ENCODE measurements at regions of chr2 and their contacts with region 1.

Region 1: DNA sequence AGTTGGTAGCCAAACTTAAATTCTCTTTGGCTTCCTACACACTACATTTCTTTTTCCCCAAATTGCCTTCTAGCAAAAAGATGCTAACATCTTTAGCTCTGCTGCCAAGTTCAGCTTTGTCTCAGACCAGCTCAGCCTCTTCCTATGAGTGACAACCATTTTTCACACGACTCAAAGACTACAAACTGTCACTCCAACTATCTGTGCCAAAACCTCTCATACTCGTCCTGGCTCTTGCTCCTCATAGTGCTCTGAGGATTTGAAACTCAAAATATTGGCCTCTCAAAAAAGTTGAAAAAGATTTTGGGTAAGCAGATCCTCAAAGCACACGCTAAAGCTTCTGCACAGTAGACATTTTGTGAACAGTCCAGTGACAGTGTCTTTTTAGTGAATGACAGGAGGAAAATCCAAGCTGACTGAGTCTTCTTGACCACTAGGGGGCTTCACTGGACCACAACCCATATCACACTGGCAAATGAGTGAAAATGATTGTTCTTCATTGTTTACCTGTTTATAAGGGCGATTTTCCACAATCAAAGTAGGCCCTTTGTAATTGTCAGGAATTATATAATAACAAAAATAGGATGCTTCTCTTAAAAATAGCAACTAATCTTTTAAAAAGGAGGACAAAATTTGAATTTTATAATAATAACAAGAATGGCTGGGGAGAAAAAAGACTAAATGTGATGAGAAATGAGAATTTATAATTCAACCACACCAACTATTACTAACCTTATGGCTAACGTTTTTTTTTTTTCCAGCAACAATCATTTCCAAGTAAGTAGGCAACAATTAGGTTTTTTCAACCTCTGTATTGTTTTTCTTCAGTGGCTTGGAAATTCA is 85.5 kb upstream of the PGAP1 start:
- DNase-seq: no peak
- H3K4me3 Mint-ChIP-seq: no peak overlapping the region
- H3K27ac Mint-ChIP-seq: peak overlapping the region; percentile 74
- H3K4me1 Mint-ChIP-seq: peaks cover 6% of the 10 kb centered on the region
- H3K27me3 Mint-ChIP-seq: peaks cover 2% of the 10 kb centered on the region

Region 2: GRCh38 chr2:196413821-196414274 is 598.2 kb before region 1 on chr2:
- intact Hi-C with region 1: no loop called
- DNase-seq: no peak
- H3K4me3 Mint-ChIP-seq: no peak overlapping the region
- H3K27ac Mint-ChIP-seq: no peak overlapping the region
- H3K4me1 Mint-ChIP-seq: peaks cover 8% of the 10 kb centered on the region
- H3K27me3 Mint-ChIP-seq: peaks cover 3% of the 10 kb centered on the region

Region 3: GRCh38 chr2:197028230-197028629 is 16.2 kb after region 1 on chr2:
- intact Hi-C with region 1: no loop called
- DNase-seq: no peak
- H3K4me3 Mint-ChIP-seq: no peak overlapping the region
- H3K27ac Mint-ChIP-seq: peak overlapping the region; percentile 20
- H3K4me1 Mint-ChIP-seq: peaks cover 63% of the 10 kb centered on the region
- H3K27me3 Mint-ChIP-seq: no peaks in the 10 kb centered on the region

Region 4: GRCh38 chr2:197057959-197058358 is 45.9 kb after region 1 on chr2:
- intact Hi-C with region 1: loop called (anchors 5 kb)
- DNase-seq: no peak
- H3K4me3 Mint-ChIP-seq: no peak overlapping the region
- H3K27ac Mint-ChIP-seq: no peak overlapping the region
- H3K4me1 Mint-ChIP-seq: peaks cover 21% of the 10 kb centered on the region
- H3K27me3 Mint-ChIP-seq: no peaks in the 10 kb centered on the region

Region 5: GRCh38 chr2:197088694-197089093 is 76.7 kb after region 1 on chr2:
- intact Hi-C with region 1: no loop called
- DNase-seq: no peak
- H3K4me3 Mint-ChIP-seq: no peak overlapping the region
- H3K27ac Mint-ChIP-seq: no peak overlapping the region
- H3K4me1 Mint-ChIP-seq: no peaks in the 10 kb centered on the region
- H3K27me3 Mint-ChIP-seq: no peaks in the 10 kb centered on the region

Region 6: GRCh38 chr2:197168705-197169104 is 156.7 kb after region 1 on chr2:
- intact Hi-C with region 1: loop called (anchors 10 kb)
- DNase-seq: peak; percentile 35
- H3K4me3 Mint-ChIP-seq: no peak overlapping the region
- H3K27ac Mint-ChIP-seq: peak overlapping the region; percentile 13
- H3K4me1 Mint-ChIP-seq: peaks cover 44% of the 10 kb centered on the region
- H3K27me3 Mint-ChIP-seq: no peaks in the 10 kb centered on the region

Region 7: DNA sequence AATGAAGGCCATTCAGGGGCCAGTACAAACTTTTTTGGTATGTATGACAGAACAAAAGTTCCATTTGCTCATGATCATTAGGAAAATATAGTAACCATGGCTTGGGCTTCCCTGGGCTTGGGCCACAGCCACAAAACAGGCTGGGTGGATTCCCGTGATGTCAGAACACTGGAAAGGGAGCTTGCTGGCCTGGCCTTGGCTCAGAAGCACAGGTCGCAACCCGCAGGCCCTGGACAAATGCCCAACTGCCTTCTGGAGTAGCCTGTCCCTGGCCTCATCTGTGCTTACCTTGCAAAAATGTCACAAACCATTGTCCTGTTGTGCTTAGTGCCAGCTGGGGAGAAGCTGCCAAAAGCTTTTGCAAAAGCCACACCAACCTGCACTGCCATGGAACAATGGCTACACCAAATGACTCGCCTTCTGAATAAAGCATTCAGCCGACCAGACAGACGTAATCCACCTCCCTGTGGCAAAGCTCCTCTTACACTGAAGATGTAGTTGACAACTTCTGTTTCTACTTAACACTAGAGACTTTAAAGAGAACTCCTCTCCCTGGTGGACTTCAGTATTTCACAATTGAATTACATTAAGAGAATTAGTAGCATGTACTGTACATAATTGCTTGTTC is 173.1 kb after region 1 on chr2:
- intact Hi-C with region 1: loop called (anchors 5 kb)
- DNase-seq: no peak
- H3K4me3 Mint-ChIP-seq: no peak overlapping the region
- H3K27ac Mint-ChIP-seq: peak overlapping the region; percentile 68
- H3K4me1 Mint-ChIP-seq: peaks cover 72% of the 10 kb centered on the region
- H3K27me3 Mint-ChIP-seq: no peaks in the 10 kb centered on the region

Region 8: GRCh38 chr2:198251102-198251501 is 1239.1 kb after region 1 on chr2:
- intact Hi-C with region 1: no loop called
- DNase-seq: no peak
- H3K4me3 Mint-ChIP-seq: no peak overlapping the region
- H3K27ac Mint-ChIP-seq: no peak overlapping the region
- H3K4me1 Mint-ChIP-seq: no peaks in the 10 kb centered on the region
- H3K27me3 Mint-ChIP-seq: peaks cover 9% of the 10 kb centered on the region